Naive thymus-derived CD4-positive, alpha-beta T cell (primary cell): ENCODE measurements at regions of chr14 and their contacts with region 1.

Region 1: GRCh38 chr14:62126879-62127478 is 364.8 kb downstream of the SNAPC1 start:
- DNase-seq: peak in 7 of 9 donors; percentile 13 to 64 (median 46)
- ATAC-seq: peak; percentile 65
- H3K4me3 ChIP-seq: no peak overlapping the region
- H3K4me3 Mint-ChIP-seq: no peak overlapping the region
- H3K27ac ChIP-seq: no peak overlapping the region
- H3K27ac Mint-ChIP-seq: no peak overlapping the region
- H3K4me1 ChIP-seq: no peaks in the 10 kb centered on the region
- H3K4me1 Mint-ChIP-seq: peaks cover 0 to 2% (median 0%) of the 10 kb centered on the region in 7 donors
- H3K27me3 ChIP-seq: peaks cover 0 to 5% of the 10 kb centered on the region in 2 donors
- H3K27me3 Mint-ChIP-seq: peaks cover 33 to 78% (median 58%) of the 10 kb centered on the region in 5 donors

Region 2: GRCh38 chr14:60349663-60350365 is 1777.2 kb before region 1 on chr14:
- CTCF ChIA-PET with region 1: no interaction called
- POLR2A ChIA-PET with region 1: no interaction called
- intact Hi-C with region 1: loop called in 1 of 2 experiments (anchors 5 kb)
- DNase-seq: peak in 6 of 9 donors; percentile 2 to 37 (median 24)
- ATAC-seq: peak; percentile 54
- H3K4me3 ChIP-seq: no peak overlapping the region
- H3K4me3 Mint-ChIP-seq: no peak overlapping the region
- H3K27ac ChIP-seq: no peak overlapping the region
- H3K27ac Mint-ChIP-seq: no peak overlapping the region
- H3K4me1 ChIP-seq: no peaks in the 10 kb centered on the region
- H3K4me1 Mint-ChIP-seq: peaks cover 0 to 12% (median 3%) of the 10 kb centered on the region in 7 donors
- H3K27me3 ChIP-seq: peaks cover 0 to 3% of the 10 kb centered on the region in 2 donors
- H3K27me3 Mint-ChIP-seq: peaks cover 0 to 27% (median 12%) of the 10 kb centered on the region in 5 donors

Region 3: DNA sequence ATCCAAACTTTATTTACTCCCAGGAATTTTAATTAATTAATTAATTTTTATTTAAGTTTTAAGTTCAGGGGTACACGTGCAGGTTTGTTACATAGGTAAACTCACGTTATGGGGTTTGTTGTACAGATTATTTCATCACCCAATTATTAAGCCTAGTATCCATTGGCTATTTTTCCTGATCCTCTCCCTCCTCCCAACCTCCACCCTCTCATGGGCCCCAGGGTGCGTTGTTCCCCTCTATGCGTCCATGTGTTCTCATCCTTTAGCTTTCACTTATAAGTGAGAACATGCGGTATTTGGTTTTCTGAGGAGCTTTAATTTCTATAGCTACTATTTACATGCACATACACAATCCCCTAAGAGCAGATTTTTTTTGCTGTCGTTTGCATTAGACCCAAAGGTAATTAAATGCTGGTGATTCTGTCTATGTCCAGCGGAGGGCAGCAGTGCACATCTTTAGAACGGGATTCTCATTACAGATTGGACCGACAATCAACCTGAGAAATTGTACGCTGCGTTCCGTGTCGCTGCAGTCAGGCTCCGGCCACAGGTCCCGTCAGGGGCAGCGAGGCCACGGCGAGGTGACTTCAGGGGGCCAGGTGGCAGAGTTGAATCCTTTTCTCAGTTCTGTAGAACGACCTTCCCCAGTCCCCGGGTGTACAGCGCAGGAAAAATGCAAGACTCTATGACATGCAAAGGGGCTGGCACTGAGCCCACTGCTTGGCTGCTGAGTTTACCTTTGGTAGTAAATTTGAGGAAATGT is 857.5 kb before region 1 on chr14:
- CTCF ChIA-PET with region 1: no interaction called
- POLR2A ChIA-PET with region 1: no interaction called
- intact Hi-C with region 1: loop called (anchors 1 to 2 kb)
- DNase-seq: peak; percentile 47 to 78 (median 71)
- ATAC-seq: peak; percentile 96
- H3K4me3 ChIP-seq: peak overlapping the region; percentile 58
- H3K4me3 Mint-ChIP-seq: peak overlapping the region; percentile 60 to 84 (median 77)
- H3K27ac ChIP-seq: no peak overlapping the region
- H3K27ac Mint-ChIP-seq: no peak overlapping the region
- H3K4me1 ChIP-seq: peaks cover 3% of the 10 kb centered on the region in 2 donors
- H3K4me1 Mint-ChIP-seq: peaks cover 0 to 8% (median 4%) of the 10 kb centered on the region in 7 donors
- H3K27me3 ChIP-seq: no peaks in the 10 kb centered on the region
- H3K27me3 Mint-ChIP-seq: peaks cover 27 to 65% (median 46%) of the 10 kb centered on the region in 5 donors

Region 4: DNA sequence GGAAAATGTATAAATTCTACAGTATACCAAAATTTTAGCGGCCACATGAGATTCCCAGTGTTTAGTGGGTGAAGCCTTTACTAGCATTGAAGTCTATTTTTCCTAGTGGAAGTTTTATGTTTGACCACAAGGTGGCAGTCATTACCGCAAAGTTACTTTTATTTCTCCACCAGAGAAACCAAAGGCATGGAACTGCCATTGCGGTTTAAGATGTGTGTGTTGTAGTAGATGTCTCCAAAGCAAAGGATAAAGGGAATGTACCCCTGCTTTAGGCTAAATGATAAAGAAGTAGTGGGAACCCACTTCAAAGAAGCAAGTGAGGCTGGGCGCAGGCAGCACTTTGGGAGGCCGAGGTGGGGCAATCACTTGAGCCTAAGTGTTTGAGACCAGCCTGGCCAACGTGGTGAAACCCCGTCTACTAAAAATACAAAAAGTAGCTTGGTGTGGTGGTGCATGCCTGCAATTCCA is 665.1 kb before region 1 on chr14:
- CTCF ChIA-PET with region 1: interaction called, 3 read pairs
- POLR2A ChIA-PET with region 1: no interaction called
- intact Hi-C with region 1: loop called (anchors 5 kb)
- DNase-seq: peak in 7 of 9 donors; percentile 59 to 78 (median 71)
- ATAC-seq: peak; percentile 76
- H3K4me3 ChIP-seq: no peak overlapping the region
- H3K4me3 Mint-ChIP-seq: peak overlapping the region; percentile 4 to 69 (median 41)
- H3K27ac ChIP-seq: peak overlapping the region; percentile 56
- H3K27ac Mint-ChIP-seq: peak overlapping the region in 8 of 9 donors; percentile 85 to 97 (median 90)
- H3K4me1 ChIP-seq: peaks cover 12 to 21% of the 10 kb centered on the region in 2 donors
- H3K4me1 Mint-ChIP-seq: peaks cover 33 to 87% (median 82%) of the 10 kb centered on the region in 7 donors
- H3K27me3 ChIP-seq: no peaks in the 10 kb centered on the region
- H3K27me3 Mint-ChIP-seq: no peaks in the 10 kb centered on the region

Region 5: DNA sequence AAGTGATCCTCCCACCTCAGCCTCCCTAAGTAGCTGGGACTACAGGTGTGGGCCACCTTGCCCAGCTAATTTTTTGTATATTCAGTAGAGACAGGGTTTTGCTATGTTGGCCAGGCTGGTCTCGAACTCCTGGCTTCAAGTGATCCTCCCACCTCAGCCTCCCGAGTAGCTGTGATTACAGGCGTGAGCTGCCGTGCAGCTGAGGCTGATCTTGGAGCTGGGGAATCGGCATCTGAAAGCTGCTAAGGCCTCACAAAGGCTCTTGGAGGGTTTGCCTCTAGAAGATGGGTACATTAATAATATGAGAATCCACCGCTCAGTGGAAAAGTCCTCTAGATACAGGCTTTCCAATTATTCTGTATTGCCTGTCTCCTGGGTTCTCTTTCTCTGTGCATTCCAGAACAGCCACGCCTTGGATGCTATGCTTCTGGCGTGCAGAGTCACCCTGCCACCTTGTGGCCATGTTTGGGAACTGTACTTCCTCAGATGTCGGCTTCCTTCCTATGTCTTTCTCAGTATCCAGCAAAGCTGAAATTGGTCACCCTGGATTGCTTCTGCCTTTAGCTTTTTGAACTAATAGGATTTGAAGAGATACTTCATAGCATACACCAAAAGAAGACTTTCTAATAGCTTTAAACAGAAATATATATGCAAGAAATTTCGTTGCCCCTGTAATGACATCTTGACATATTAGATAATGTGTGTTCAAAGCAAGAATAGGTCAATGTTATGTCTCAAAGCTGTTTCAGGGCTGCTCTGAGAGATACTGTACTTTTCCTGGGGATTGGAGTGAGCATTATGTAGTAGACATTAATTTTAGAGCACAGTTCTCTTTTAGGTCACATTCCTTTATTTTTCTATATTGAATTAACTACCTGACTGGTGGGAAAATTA is 289.4 kb before region 1 on chr14:
- CTCF ChIA-PET with region 1: interaction called, 4 read pairs
- POLR2A ChIA-PET with region 1: no interaction called
- intact Hi-C with region 1: loop called in 1 of 2 experiments (anchors 2 kb)
- DNase-seq: peak; percentile 49 to 76 (median 67)
- ATAC-seq: peak; percentile 98
- H3K4me3 ChIP-seq: no peak overlapping the region
- H3K4me3 Mint-ChIP-seq: no peak overlapping the region
- H3K27ac ChIP-seq: no peak overlapping the region
- H3K27ac Mint-ChIP-seq: no peak overlapping the region
- H3K4me1 ChIP-seq: no peaks in the 10 kb centered on the region
- H3K4me1 Mint-ChIP-seq: peaks cover 0 to 9% (median 0%) of the 10 kb centered on the region in 7 donors
- H3K27me3 ChIP-seq: no peaks in the 10 kb centered on the region
- H3K27me3 Mint-ChIP-seq: peaks cover 0 to 31% (median 0%) of the 10 kb centered on the region in 5 donors

Region 6: DNA sequence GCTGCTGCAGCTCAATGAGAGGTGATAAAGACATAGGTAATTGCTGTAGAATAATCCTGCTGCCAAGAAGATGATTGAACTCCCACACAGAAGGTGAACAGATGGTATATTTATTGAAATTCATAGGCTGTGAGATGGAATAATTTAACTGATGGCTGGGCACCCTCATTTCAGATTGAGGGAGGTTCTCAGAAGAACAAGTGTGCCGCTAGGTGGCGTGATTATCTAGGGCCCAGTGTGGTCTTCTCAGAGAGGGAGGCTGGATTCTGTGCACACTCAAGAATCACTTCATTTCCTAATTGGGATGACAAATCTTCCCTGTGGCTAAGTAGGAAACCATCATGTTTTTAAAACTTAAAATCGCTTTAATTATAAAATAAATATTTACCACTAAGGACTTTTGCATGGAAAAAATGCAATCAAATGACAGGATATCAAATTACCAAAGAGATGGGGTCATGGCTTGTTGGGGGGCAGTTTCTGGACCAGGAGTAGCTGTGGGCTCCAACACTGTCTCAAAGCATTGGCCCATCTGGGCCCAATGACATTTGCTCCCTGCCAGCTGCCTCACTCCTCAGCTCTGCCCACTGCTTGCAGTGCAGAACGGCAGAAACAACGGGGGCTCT is 232.4 kb before region 1 on chr14:
- CTCF ChIA-PET with region 1: interaction called, 5 read pairs
- POLR2A ChIA-PET with region 1: interaction called, 3 read pairs
- intact Hi-C with region 1: loop called (anchors 1 kb)
- DNase-seq: peak; percentile 16 to 52 (median 38)
- ATAC-seq: peak; percentile 51
- H3K4me3 ChIP-seq: no peak overlapping the region
- H3K4me3 Mint-ChIP-seq: no peak overlapping the region
- H3K27ac ChIP-seq: no peak overlapping the region
- H3K27ac Mint-ChIP-seq: no peak overlapping the region
- H3K4me1 ChIP-seq: peaks cover 9% of the 10 kb centered on the region in 2 donors
- H3K4me1 Mint-ChIP-seq: peaks cover 8 to 22% (median 16%) of the 10 kb centered on the region in 7 donors
- H3K27me3 ChIP-seq: no peaks in the 10 kb centered on the region
- H3K27me3 Mint-ChIP-seq: peaks cover 0 to 37% (median 5%) of the 10 kb centered on the region in 5 donors